K562 (cell line): ENCODE measurements at regions of chr16 and their contacts with region 1.

Region 1: GRCh38 chr16:58644805-58645484 is 15.3 kb upstream of the CNOT1 start:
- DNase-seq: no peak
- ATAC-seq: no peak
- H3K4me3 ChIP-seq: no peak overlapping the region
- H3K27ac ChIP-seq: no peak overlapping the region
- H3K4me1 ChIP-seq: no peaks in the 10 kb centered on the region; a peak in 1 of 5 replicates
- H3K27me3 ChIP-seq: no peaks in the 10 kb centered on the region; a peak in 1 of 5 replicates
- CTCF ChIP-seq: no peak
- EP300 ChIP-seq: no peak
- POLR2A ChIP-seq: no peak
- RAD21 ChIP-seq: no peak

Region 2: GRCh38 chr16:58345574-58346354 is 299.2 kb before region 1 on chr16:
- CTCF ChIA-PET with region 1: no interaction called
- POLR2A ChIA-PET with region 1: no interaction called
- in situ Hi-C with region 1: loop called (anchors 10 kb)
- intact Hi-C with region 1: no loop called
- DNase-seq: no peak
- ATAC-seq: 0 out of 3 replicates have a peak, but pooled peaks have one; percentile 25
- H3K4me3 ChIP-seq: no peak overlapping the region
- H3K27ac ChIP-seq: no peak overlapping the region
- H3K4me1 ChIP-seq: peaks cover 2 to 5% of the 10 kb centered on the region in 2 experiments; a peak in 2 of 5 replicates
- H3K27me3 ChIP-seq: peaks cover 0 to 2% of the 10 kb centered on the region in 2 experiments; a peak in 2 of 5 replicates
- CTCF ChIP-seq: peak in 1 of 3 experiments; percentile 44; a peak in 2 of 6 replicates
- EP300 ChIP-seq: no peak
- POLR2A ChIP-seq: no peak
- RAD21 ChIP-seq: peak; percentile 16 to 41; a peak in 3 of 4 replicates

Region 3: GRCh38 chr16:58425756-58426494 is 219.0 kb before region 1 on chr16:
- CTCF ChIA-PET with region 1: no interaction called
- POLR2A ChIA-PET with region 1: no interaction called
- in situ Hi-C with region 1: no loop called
- intact Hi-C with region 1: no loop called
- DNase-seq: no peak
- ATAC-seq: no peak
- H3K4me3 ChIP-seq: no peak overlapping the region
- H3K27ac ChIP-seq: no peak overlapping the region
- H3K4me1 ChIP-seq: no peaks in the 10 kb centered on the region; a peak in 1 of 5 replicates
- H3K27me3 ChIP-seq: peaks cover 37 to 41% of the 10 kb centered on the region in 2 experiments; a peak in 4 of 5 replicates
- CTCF ChIP-seq: no peak
- EP300 ChIP-seq: no peak
- POLR2A ChIP-seq: no peak
- RAD21 ChIP-seq: no peak

Region 4: DNA sequence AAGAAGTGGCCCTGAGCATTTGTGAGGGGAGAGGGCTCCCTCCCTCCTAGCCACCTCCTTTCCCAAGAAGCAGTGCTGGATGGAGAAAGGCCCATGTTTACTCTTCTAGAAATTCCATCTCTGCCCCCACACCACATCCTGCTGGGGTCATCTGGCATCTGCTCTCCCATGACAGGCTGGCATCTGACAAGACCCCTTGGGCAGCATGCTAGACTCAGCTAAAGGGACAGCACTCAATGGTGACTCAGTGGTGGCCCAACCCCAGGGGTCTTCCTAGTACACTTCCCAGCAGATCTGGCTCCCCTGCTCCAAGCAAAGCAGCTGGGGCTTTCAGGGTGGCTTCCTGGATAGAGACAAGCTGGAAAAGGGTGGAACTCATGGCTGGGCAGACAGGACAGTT is 25.2 kb after region 1 on chr16:
- CTCF ChIA-PET with region 1: no interaction called
- POLR2A ChIA-PET with region 1: no interaction called
- in situ Hi-C with region 1: no loop called
- intact Hi-C with region 1: no loop called
- DNase-seq: peak in 2 of 4 experiments; percentile 6 to 7
- ATAC-seq: no peak
- H3K4me3 ChIP-seq: no peak overlapping the region
- H3K27ac ChIP-seq: no peak overlapping the region
- H3K4me1 ChIP-seq: no peaks in the 10 kb centered on the region; a peak in 1 of 5 replicates
- H3K27me3 ChIP-seq: no peaks in the 10 kb centered on the region
- CTCF ChIP-seq: no peak
- EP300 ChIP-seq: no peak
- POLR2A ChIP-seq: no peak
- RAD21 ChIP-seq: no peak

Region 5: GRCh38 chr16:58716468-58716867 is 71.5 kb after region 1 on chr16:
- CTCF ChIA-PET with region 1: no interaction called
- POLR2A ChIA-PET with region 1: no interaction called
- in situ Hi-C with region 1: no loop called
- intact Hi-C with region 1: no loop called
- DNase-seq: no peak
- ATAC-seq: no peak
- H3K4me3 ChIP-seq: no peak overlapping the region
- H3K27ac ChIP-seq: no peak overlapping the region
- H3K4me1 ChIP-seq: no peaks in the 10 kb centered on the region
- H3K27me3 ChIP-seq: no peaks in the 10 kb centered on the region
- CTCF ChIP-seq: no peak
- EP300 ChIP-seq: no peak
- POLR2A ChIP-seq: no peak
- RAD21 ChIP-seq: no peak